Activated CD4-positive, alpha-beta T cell treated with anti-CD3 and anti-CD28 coated beads, Interleukin-2, amount 10 ng/mL, durations not matched to agents 24 days and 14 days (primary cell): ENCODE measurements at regions of chr2 and their contacts with region 1.

Region 1: DNA sequence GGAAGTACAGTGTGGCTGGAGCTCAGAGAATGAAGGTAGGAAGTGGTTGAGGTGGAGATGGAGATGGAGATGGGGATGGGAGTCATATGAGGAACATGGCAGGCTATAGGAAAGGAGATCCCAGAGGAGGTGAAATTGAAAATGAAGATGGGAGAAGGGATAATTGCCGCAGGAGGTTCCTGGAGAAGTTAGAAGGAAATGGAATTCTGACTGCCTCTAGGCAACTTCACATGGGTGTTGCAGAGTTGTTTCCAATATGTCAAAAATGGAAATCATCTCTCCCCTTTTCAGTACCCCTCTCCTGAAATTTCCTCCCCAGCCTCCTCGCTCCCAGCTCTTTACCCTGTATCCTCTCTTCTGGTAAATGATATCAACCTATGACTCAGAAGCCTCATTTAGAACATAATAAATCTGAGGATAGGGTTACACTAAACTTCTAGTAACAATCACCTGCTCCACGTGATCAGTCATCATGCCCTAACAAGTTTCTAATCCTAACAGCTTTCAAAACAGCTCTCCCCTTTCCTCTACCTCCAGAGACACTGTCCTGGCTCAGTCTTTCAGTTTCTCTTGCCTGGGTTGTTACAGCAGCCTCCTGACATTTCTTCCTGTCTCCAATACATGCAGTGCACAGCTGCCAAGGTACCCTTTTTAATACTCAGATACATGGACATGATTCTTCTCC is 201.9 kb upstream of the RBMS1 start:
- DNase-seq: no peak
- H3K4me3 Mint-ChIP-seq: no peak overlapping the region
- H3K27ac Mint-ChIP-seq: no peak overlapping the region
- H3K4me1 Mint-ChIP-seq: no peaks in the 10 kb centered on the region
- H3K27me3 Mint-ChIP-seq: peaks cover 5% of the 10 kb centered on the region

Region 2: GRCh38 chr2:160666154-160667060 is 29.1 kb before region 1 on chr2:
- intact Hi-C with region 1: loop called (anchors 1 kb)
- DNase-seq: peak; percentile 67
- H3K4me3 Mint-ChIP-seq: peak overlapping the region; percentile 53
- H3K27ac Mint-ChIP-seq: peak overlapping the region; percentile 45
- H3K4me1 Mint-ChIP-seq: peaks cover 20% of the 10 kb centered on the region
- H3K27me3 Mint-ChIP-seq: no peaks in the 10 kb centered on the region